ENCODE measurements at regions of chr6 and their contacts with region 1.

Region 1: DNA sequence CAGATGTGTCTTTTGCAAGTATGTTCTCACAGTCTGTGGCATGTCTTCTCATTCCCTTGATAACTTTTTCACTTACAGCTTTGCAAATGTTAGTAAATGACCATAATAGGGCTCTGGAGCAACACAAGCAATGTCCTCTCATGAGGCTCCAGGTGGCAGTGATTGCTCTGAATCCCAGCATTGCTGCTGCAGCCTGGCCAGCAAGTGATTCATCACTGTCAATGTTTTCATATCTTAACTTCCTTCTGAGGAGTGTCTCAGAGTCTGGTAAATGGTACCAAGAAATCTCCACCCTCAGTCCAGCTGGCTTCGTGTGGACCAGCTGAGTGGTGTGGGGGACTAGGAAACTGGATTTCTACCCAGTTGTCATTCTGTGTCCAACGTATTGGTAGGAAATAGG is 139.6 kb downstream of the MYLK4 start:
- DNase-seq: peak in 1 of 2 donors; percentile 67
- ATAC-seq: no peak
- H3K4me3 ChIP-seq: no peak overlapping the region
- H3K27ac ChIP-seq: no peak overlapping the region
- H3K4me1 ChIP-seq: peaks cover 1 to 4% of the 10 kb centered on the region in 2 donors
- H3K27me3 ChIP-seq: no peaks in the 10 kb centered on the region

Region 2: DNA sequence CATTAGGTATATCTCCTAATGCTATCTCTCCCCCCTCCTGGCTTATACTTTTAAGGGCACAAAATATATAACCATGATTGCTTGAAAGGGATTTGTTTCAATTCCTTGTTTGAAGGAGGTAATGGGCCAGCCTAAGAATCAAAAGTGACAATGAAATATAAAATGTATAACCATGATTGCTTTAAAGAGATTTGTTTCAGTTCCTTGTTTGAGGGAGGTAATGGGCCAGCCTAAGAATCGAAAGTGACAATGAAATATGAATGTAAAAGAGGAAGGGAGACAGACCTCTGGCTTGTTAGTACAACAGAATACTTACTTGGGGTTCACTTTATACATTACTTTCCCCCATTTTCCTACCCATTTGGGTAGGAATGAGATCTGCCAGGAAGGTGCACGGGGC is 945.9 kb before region 1 on chr6:
- intact Hi-C with region 1: no loop called
- DNase-seq: no peak
- ATAC-seq: no peak
- H3K4me3 ChIP-seq: no peak overlapping the region
- H3K27ac ChIP-seq: no peak overlapping the region
- H3K4me1 ChIP-seq: no peaks in the 10 kb centered on the region
- H3K27me3 ChIP-seq: no peaks in the 10 kb centered on the region

Region 3: GRCh38 chr6:2478200-2478599 is 132.9 kb before region 1 on chr6:
- intact Hi-C with region 1: loop called (anchors 10 kb)
- DNase-seq: no peak
- ATAC-seq: no peak
- H3K4me3 ChIP-seq: no peak overlapping the region
- H3K27ac ChIP-seq: peak overlapping the region in 1 of 2 donors; percentile 16
- H3K4me1 ChIP-seq: peaks cover 0 to 4% of the 10 kb centered on the region in 2 donors
- H3K27me3 ChIP-seq: no peaks in the 10 kb centered on the region

Region 4: DNA sequence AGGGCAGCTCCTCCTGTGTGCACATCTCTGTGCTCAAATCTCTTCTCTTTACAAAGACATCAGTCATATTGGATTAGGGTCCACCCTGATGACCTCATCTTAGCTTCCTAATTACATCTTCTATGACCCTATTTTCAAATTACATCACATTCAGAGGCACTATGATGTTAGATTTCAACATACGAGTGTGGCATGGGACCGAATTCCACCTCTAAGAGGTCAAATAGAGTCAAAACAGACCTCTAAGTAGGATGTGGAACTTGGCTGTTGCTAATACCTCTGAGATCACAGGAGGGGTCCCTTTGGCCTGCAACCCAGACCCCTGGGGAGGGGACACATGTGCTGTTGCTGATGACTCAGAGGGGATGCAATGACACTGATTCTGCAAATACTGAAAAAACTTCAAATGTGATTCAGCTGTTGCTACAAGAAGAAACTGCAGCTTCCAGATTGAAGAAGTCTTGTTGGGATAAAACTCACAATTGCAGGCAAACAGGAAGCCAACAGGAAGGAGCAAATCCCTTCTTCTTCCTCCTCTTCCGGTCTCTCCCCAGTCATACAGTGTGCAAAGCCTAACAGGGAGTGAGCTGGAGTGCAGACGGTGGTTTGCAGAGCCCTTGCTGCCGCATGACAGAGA is 76.6 kb before region 1 on chr6:
- intact Hi-C with region 1: no loop called
- DNase-seq: no peak
- ATAC-seq: no peak
- H3K4me3 ChIP-seq: no peak overlapping the region
- H3K27ac ChIP-seq: no peak overlapping the region
- H3K4me1 ChIP-seq: no peaks in the 10 kb centered on the region
- H3K27me3 ChIP-seq: no peaks in the 10 kb centered on the region

Measured in aorta (tissue), 5 donors.